ENCODE measurements at regions of chr22 and their contacts with region 1.

Region 1: GRCh38 chr22:40044102-40044869 is 49.5 kb downstream of the FAM83F start:
- DNase-seq: peak; percentile 100
- H3K4me3 ChIP-seq: peak overlapping the region; percentile 70
- H3K27ac ChIP-seq: peak overlapping the region; percentile 65
- H3K4me1 ChIP-seq: peaks cover 42% of the 10 kb centered on the region
- CTCF ChIP-seq: no peak

Region 2: GRCh38 chr22:39710380-39711150 is 333.7 kb before region 1 on chr22:
- CTCF ChIA-PET with region 1: no interaction called
- POLR2A ChIA-PET with region 1: no interaction called
- intact Hi-C with region 1: no loop called
- DNase-seq: no peak
- H3K4me3 ChIP-seq: no peak overlapping the region
- H3K27ac ChIP-seq: no peak overlapping the region
- H3K4me1 ChIP-seq: no peaks in the 10 kb centered on the region
- CTCF ChIP-seq: no peak

Region 3: DNA sequence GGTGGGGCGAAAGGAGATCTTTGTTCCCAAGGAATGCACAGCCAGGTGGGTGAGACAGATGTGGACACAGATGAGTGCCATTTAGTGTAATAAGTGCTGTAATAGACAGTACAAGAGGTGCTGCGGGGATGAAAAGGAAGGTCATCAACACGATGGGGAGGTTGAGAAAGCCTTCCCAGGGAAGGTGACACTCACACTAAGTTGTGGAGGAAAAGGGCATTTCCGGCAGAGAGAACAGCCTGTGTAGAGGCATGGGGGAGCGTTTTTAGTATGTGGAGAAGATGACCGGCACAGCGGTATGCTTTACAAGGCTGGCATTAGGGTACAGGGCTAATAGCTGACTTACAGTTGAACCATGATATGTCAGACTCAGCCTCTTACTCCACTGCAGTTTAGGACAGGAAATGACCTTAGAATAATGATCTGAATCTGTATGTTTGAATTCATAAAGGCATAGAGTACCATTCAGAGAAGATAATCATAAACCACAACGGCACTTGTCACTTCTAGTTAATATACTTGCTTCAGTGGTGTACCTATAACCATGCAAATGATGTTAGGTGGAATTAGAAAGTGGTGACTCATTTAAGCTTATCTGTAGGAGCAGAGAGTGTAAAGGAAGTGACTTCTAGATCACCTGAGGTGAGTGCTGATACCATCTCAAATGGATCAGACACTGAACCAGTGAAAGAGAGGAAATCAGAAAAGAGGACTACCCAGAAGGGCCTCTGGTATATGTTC is 11.0 kb after region 1 on chr22:
- CTCF ChIA-PET with region 1: no interaction called
- POLR2A ChIA-PET with region 1: interaction called, 18 read pairs
- intact Hi-C with region 1: no loop called
- DNase-seq: peak; percentile 31
- H3K4me3 ChIP-seq: peak overlapping the region; percentile 39
- H3K27ac ChIP-seq: peak overlapping the region; percentile 61
- H3K4me1 ChIP-seq: peaks cover 74% of the 10 kb centered on the region
- CTCF ChIP-seq: no peak

Region 4: GRCh38 chr22:40210818-40211217 is 166.5 kb after region 1 on chr22:
- CTCF ChIA-PET with region 1: no interaction called
- POLR2A ChIA-PET with region 1: interaction called, 9 read pairs
- intact Hi-C with region 1: loop called (anchors 2 kb)
- DNase-seq: peak; percentile 83
- H3K4me3 ChIP-seq: peak overlapping the region; percentile 42
- H3K27ac ChIP-seq: peak overlapping the region; percentile 81
- H3K4me1 ChIP-seq: peaks cover 76% of the 10 kb centered on the region
- CTCF ChIP-seq: peak; percentile 30; the same call in 1 of the 2 replicates

Region 5: GRCh38 chr22:40346178-40347118 is 302.2 kb after region 1 on chr22 and contains the start of gene ADSL:
- CTCF ChIA-PET with region 1: no interaction called
- POLR2A ChIA-PET with region 1: interaction called, 14 read pairs
- intact Hi-C with region 1: loop called (anchors 1 kb)
- DNase-seq: peak; percentile 91
- H3K4me3 ChIP-seq: peak within 1 kb of the TSS; percentile 80
- H3K27ac ChIP-seq: peak within 1 kb of the TSS; percentile 96
- H3K4me1 ChIP-seq: peaks cover 29% of the 10 kb centered on the region
- CTCF ChIP-seq: no peak
- total RNA-seq, gene ADSL: 117 and 141 TPM in 2 replicates

Measured in OCI-LY7 (cell line).